Activated naive CD4-positive, alpha-beta T cell treated with anti-CD3 and anti-CD28 coated beads for 36 hours (primary cell): ENCODE measurements at regions of chr19 and their contacts with region 1.

Region 1: GRCh38 chr19:6516659-6517291 is 14.1 kb upstream of the TNFSF9 start:
- DNase-seq: peak; percentile 96
- H3K4me3 Mint-ChIP-seq: peak overlapping the region; percentile 89
- H3K27ac Mint-ChIP-seq: peak overlapping the region; percentile 80
- H3K4me1 Mint-ChIP-seq: peaks cover 27% of the 10 kb centered on the region
- H3K27me3 Mint-ChIP-seq: no peaks in the 10 kb centered on the region

Region 2: GRCh38 chr19:6199240-6199983 is 317.4 kb before region 1 on chr19:
- CTCF ChIA-PET with region 1: no interaction called
- intact Hi-C with region 1: no loop called
- DNase-seq: peak; percentile 99
- H3K4me3 Mint-ChIP-seq: peak overlapping the region; percentile 99
- H3K27ac Mint-ChIP-seq: peak overlapping the region; percentile 79
- H3K4me1 Mint-ChIP-seq: peaks cover 12% of the 10 kb centered on the region
- H3K27me3 Mint-ChIP-seq: no peaks in the 10 kb centered on the region

Region 3: GRCh38 chr19:6540918-6541689 is 24.3 kb after region 1 on chr19:
- CTCF ChIA-PET with region 1: no interaction called
- intact Hi-C with region 1: no loop called
- DNase-seq: no peak
- H3K4me3 Mint-ChIP-seq: no peak overlapping the region
- H3K27ac Mint-ChIP-seq: no peak overlapping the region
- H3K4me1 Mint-ChIP-seq: peaks cover 10% of the 10 kb centered on the region
- H3K27me3 Mint-ChIP-seq: peaks cover under 1% of the 10 kb centered on the region

Region 4: GRCh38 chr19:6588508-6589345 is 72.0 kb after region 1 on chr19:
- CTCF ChIA-PET with region 1: interaction called, 3 read pairs
- intact Hi-C with region 1: loop called (anchors 2 kb)
- DNase-seq: peak; percentile 38
- H3K4me3 Mint-ChIP-seq: peak overlapping the region; percentile 41
- H3K27ac Mint-ChIP-seq: no peak overlapping the region
- H3K4me1 Mint-ChIP-seq: peaks cover 53% of the 10 kb centered on the region
- H3K27me3 Mint-ChIP-seq: peaks cover 65% of the 10 kb centered on the region

Region 5: GRCh38 chr19:6632002-6632621 is 115.3 kb after region 1 on chr19:
- CTCF ChIA-PET with region 1: interaction called, 9 read pairs
- intact Hi-C with region 1: loop called (anchors 1 kb)
- DNase-seq: peak; percentile 94
- H3K4me3 Mint-ChIP-seq: no peak overlapping the region
- H3K27ac Mint-ChIP-seq: no peak overlapping the region
- H3K4me1 Mint-ChIP-seq: peaks cover 24% of the 10 kb centered on the region
- H3K27me3 Mint-ChIP-seq: peaks cover 4% of the 10 kb centered on the region

Region 6: DNA sequence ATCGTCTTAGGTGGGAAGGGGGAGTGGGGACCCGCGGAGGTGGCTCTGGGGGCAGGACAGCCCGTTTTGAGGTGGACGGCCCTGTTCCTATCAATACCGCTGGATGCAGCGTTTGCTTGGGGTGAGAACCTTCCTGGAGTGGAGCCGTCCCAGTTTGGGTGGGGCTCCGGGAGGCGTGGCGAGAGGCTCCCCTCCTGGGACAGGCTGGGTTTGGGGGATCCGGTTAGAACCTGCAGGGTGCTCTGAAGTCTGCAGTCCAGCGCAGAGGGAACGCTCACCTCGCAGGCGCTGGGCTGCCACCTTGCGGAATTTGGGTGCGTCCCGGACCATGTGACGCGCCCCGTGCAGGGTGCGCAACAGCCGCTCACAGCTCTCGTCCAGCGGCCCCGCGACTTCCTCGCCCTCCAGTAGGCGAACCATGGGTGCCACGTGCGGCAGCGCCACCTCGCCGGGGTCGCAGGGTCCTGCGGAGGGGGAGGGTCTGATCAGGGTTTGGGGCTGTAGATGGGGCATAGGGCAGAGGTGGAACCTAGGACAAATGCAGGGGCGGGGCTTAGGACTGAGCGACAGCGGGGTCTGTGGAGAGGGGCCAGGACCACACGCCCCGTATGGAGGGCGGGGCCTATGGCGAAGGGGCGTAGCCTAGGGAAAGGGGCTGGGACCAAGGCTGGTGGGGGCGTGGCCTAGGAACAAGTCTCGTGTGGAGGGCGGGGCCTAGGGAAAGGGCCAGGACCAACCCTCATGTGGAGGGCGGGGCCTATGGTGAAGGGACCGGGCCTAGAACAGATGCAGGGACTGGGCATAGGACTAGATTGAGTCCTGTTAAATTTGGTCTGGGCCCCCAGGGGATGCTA is 236.6 kb after region 1 on chr19:
- CTCF ChIA-PET with region 1: no interaction called
- intact Hi-C with region 1: loop called (anchors 5 kb)
- DNase-seq: peak; percentile 90
- H3K4me3 Mint-ChIP-seq: peak overlapping the region; percentile 65
- H3K27ac Mint-ChIP-seq: peak overlapping the region; percentile 74
- H3K4me1 Mint-ChIP-seq: peaks cover 12% of the 10 kb centered on the region
- H3K27me3 Mint-ChIP-seq: no peaks in the 10 kb centered on the region